Activated CD4-positive, alpha-beta T cell treated with anti-CD3 and anti-CD28 coated beads for 36 hours (primary cell): ENCODE measurements at regions of chr17 and their contacts with region 1.

Region 1: DNA sequence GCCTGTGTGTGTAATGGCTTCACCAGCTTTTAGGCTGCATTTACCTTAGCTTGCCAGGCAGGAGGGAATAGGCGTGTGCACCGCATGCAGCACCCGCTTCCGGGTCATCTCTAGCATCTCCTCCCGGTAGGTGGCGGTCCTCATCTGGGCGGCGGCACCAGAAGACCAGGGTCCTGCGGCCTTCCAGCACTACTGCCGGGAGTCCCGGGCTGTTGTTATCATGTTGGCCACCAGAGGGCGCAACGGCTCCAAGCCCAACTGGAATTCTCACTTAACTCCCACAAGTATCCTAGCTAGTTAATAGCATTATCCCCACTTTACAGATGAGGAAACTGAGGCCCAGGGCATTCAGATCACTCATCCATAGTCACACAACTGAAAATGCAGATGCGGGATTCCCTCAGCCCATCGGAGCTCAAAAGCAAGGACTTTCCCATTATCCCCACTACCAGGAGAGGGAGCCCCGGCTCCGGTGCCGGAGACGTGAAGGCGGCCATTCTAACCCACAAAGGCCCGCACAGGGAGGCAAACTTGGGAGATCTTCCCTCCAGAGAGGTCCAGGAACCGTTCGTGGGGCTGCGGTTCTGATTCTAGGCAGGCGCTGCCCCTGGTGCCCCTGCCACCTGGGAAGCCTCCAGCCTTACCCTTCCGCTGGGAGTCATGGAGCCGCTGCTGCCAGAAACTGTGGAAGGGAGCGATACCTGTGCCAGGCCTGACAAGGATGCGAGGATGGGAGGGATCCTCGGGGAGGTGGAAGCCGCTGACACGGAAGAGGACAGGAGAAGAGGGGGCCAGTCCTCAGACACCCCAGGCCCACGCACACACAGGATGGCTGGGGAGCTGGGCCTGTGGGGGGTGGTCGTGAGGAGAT is 23.9 kb downstream of the LGALS9 start:
- DNase-seq: peak; percentile 87
- ATAC-seq: peak; percentile 92
- H3K4me3 Mint-ChIP-seq: no peak overlapping the region
- H3K27ac Mint-ChIP-seq: no peak overlapping the region
- H3K4me1 Mint-ChIP-seq: peaks cover 7% of the 10 kb centered on the region
- H3K27me3 Mint-ChIP-seq: no peaks in the 10 kb centered on the region

Region 2: GRCh38 chr17:27353461-27354050 is 301.3 kb before region 1 on chr17:
- CTCF ChIA-PET with region 1: interaction called, 5 read pairs
- POLR2A ChIA-PET with region 1: no interaction called
- intact Hi-C with region 1: loop called (anchors 1 to 5 kb)
- DNase-seq: peak; percentile 94
- ATAC-seq: peak; percentile 90
- H3K4me3 Mint-ChIP-seq: peak overlapping the region; percentile 85
- H3K27ac Mint-ChIP-seq: peak overlapping the region; percentile 95
- H3K4me1 Mint-ChIP-seq: peaks cover 25% of the 10 kb centered on the region
- H3K27me3 Mint-ChIP-seq: no peaks in the 10 kb centered on the region

Region 3: GRCh38 chr17:27609611-27610303 is 45.1 kb before region 1 on chr17:
- CTCF ChIA-PET with region 1: interaction called, 36 read pairs
- POLR2A ChIA-PET with region 1: no interaction called
- intact Hi-C with region 1: no loop called
- DNase-seq: peak; percentile 47
- ATAC-seq: no peak
- H3K4me3 Mint-ChIP-seq: no peak overlapping the region
- H3K27ac Mint-ChIP-seq: no peak overlapping the region
- H3K4me1 Mint-ChIP-seq: peaks cover 21% of the 10 kb centered on the region
- H3K27me3 Mint-ChIP-seq: no peaks in the 10 kb centered on the region

Region 4: DNA sequence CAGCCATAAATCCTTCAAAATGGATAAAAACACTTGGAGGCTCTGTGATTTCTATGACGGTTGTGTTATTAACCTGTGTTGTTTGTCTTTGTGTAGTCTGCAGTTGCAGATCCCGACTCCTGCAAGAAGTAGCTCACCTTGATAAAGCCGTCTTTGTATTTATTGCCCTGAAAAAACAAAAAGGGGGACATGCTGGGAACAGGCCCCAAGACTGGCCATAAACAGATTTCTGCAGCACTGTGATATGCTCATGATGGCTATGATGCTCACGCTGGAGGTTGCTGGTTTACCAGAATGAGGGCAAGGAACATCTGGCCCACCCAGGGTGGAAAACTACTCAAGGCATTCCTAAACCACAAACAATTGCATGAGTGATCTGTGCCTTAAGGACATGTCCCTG is 47.1 kb after region 1 on chr17:
- CTCF ChIA-PET with region 1: no interaction called
- POLR2A ChIA-PET with region 1: no interaction called
- intact Hi-C with region 1: no loop called
- DNase-seq: no peak
- ATAC-seq: no peak
- H3K4me3 Mint-ChIP-seq: no peak overlapping the region
- H3K27ac Mint-ChIP-seq: no peak overlapping the region
- H3K4me1 Mint-ChIP-seq: no peaks in the 10 kb centered on the region
- H3K27me3 Mint-ChIP-seq: peaks cover 8% of the 10 kb centered on the region

Region 5: GRCh38 chr17:27760069-27760885 is 105.4 kb after region 1 on chr17:
- CTCF ChIA-PET with region 1: interaction called, 36 read pairs
- POLR2A ChIA-PET with region 1: no interaction called
- intact Hi-C with region 1: loop called (anchors 1 to 2 kb)
- DNase-seq: peak; percentile 86
- ATAC-seq: peak; percentile 64
- H3K4me3 Mint-ChIP-seq: no peak overlapping the region
- H3K27ac Mint-ChIP-seq: no peak overlapping the region
- H3K4me1 Mint-ChIP-seq: no peaks in the 10 kb centered on the region
- H3K27me3 Mint-ChIP-seq: peaks cover 3% of the 10 kb centered on the region

Region 6: GRCh38 chr17:28252436-28252835 is 597.5 kb after region 1 on chr17:
- CTCF ChIA-PET with region 1: no interaction called
- POLR2A ChIA-PET with region 1: no interaction called
- intact Hi-C with region 1: loop called in 1 of 2 experiments (anchors 10 kb)
- DNase-seq: no peak
- ATAC-seq: no peak
- H3K4me3 Mint-ChIP-seq: no peak overlapping the region
- H3K27ac Mint-ChIP-seq: no peak overlapping the region
- H3K4me1 Mint-ChIP-seq: peaks cover 5% of the 10 kb centered on the region
- H3K27me3 Mint-ChIP-seq: peaks cover 14% of the 10 kb centered on the region